Dendritic cell treated with granulocyte-macrophage colony-stimulating factor and Interleukin-4, amounts not matched to agents 40 ng/mL and 50 ng/mL, for 4 days (primary cell): ENCODE measurements at regions of chr3 and their contacts with region 1.

Region 1: DNA sequence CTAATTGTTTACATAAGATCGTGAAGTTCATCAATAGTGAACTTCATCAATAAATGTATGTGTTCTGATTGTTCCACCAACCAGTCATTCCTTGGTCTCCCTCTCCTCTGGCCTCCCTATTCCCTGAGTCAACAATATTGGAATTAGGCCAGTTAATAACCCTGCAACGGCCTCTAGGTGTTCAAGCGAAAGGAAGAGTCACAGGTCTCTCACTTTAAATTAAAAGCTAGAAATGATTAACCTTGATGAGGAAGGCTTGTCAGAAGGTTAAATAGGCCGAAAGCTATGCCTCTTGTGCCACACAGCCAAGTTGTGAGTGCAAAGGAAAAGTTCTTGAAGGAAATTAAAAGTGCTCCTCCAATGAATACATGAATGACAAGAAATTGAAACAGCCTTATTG is 89.4 kb upstream of the ACKR4 start:
- H3K4me3 Mint-ChIP-seq: no peak overlapping the region
- H3K27ac Mint-ChIP-seq: no peak overlapping the region
- H3K4me1 Mint-ChIP-seq: no peaks in the 10 kb centered on the region
- H3K27me3 Mint-ChIP-seq: no peaks in the 10 kb centered on the region

Region 2: GRCh38 chr3:132456571-132456970 is 51.1 kb before region 1 on chr3:
- intact Hi-C with region 1: loop called (anchors 5 kb)
- H3K4me3 Mint-ChIP-seq: no peak overlapping the region
- H3K27ac Mint-ChIP-seq: no peak overlapping the region
- H3K4me1 Mint-ChIP-seq: peaks cover 5% of the 10 kb centered on the region
- H3K27me3 Mint-ChIP-seq: no peaks in the 10 kb centered on the region

Region 3: DNA sequence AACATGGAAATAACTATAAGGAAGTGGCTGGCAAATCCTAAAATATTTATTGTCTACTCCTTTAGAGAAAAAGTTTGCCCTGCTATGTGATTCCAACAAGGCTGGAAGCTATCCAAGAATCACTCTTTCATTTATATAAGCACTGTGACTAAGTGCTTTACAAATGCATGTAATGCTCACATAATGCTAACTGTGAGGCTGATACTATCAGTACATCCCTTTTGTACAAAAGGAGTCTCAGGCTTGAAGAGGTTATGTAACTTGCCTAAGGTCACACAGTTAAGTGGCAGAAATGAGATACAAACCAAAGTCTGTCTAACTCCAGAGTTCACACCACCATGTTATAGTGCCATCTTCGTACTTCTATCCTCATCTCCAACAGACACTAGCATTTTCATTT is 1137.1 kb after region 1 on chr3:
- intact Hi-C with region 1: loop called (anchors 10 kb)
- H3K4me3 Mint-ChIP-seq: no peak overlapping the region
- H3K27ac Mint-ChIP-seq: no peak overlapping the region
- H3K4me1 Mint-ChIP-seq: no peaks in the 10 kb centered on the region
- H3K27me3 Mint-ChIP-seq: no peaks in the 10 kb centered on the region

Region 4: DNA sequence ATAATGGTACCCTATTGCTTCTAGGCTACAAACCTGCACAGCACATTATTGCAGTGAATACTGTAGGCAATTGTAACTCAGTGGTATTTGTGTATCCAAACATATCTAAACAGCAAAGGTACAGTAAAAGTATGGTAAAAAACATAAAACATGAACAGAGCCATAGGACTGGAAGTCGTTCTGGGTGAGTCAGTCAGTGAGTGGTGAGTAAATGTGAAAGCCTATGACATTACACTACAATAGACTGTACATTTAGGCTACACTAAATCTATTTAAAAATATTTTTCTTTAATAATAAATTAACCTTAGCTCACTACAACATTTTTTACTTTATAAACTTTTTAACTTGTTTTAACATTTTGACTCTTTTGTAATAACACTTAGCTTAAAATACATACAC is 1366.7 kb after region 1 on chr3:
- intact Hi-C with region 1: no loop called
- H3K4me3 Mint-ChIP-seq: no peak overlapping the region
- H3K27ac Mint-ChIP-seq: no peak overlapping the region
- H3K4me1 Mint-ChIP-seq: no peaks in the 10 kb centered on the region
- H3K27me3 Mint-ChIP-seq: no peaks in the 10 kb centered on the region